ENCODE measurements at regions of chr2 and their contacts with region 1.

Region 1: GRCh38 chr2:69724540-69725159 is 17.3 kb upstream of the ANXA4 start:
- DNase-seq: peak; percentile 92
- ATAC-seq: peak; percentile 90
- H3K4me3 Mint-ChIP-seq: peak overlapping the region; percentile 70
- H3K27ac Mint-ChIP-seq: no peak overlapping the region
- H3K4me1 Mint-ChIP-seq: no peaks in the 10 kb centered on the region
- H3K27me3 Mint-ChIP-seq: no peaks in the 10 kb centered on the region
- CTCF ChIP-seq: peak; percentile 92

Region 2: GRCh38 chr2:69535817-69536241 is 188.8 kb before region 1 on chr2:
- CTCF ChIA-PET with region 1: no interaction called
- POLR2A ChIA-PET with region 1: no interaction called
- DNase-seq: no peak
- ATAC-seq: no peak
- H3K4me3 Mint-ChIP-seq: no peak overlapping the region
- H3K27ac Mint-ChIP-seq: no peak overlapping the region
- H3K4me1 Mint-ChIP-seq: no peaks in the 10 kb centered on the region
- H3K27me3 Mint-ChIP-seq: no peaks in the 10 kb centered on the region
- CTCF ChIP-seq: no peak

Region 3: DNA sequence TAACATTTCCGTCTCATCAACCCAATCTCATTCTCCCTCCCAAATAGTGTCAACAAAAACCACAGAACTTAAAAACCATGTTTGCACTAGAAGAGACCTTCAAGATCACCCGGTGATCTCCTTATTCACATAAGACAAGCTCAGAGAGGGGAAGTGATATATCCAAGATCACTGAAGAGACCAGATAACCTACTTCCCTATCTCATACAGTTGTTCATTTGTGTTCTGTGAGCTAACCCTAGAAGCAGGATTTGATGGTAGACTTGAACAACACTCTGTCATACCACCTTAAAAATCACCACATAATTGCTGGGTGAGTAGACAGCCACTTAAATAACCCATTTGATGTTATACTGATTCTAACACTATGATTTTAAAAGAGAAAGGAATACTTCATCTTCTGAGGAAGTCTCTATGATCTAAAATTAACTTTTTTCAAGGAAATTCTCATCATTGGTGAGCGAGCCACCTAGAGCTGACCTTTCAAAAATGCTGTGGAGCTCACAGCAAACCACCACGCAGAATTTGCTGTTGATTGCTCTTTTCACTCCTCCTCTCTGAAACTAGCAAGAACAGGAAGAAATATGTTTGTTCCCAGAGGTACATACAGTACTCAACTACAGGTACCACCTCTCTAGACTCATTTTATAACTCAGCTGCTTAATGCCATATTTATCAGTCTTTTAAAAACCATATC is 96.2 kb before region 1 on chr2:
- CTCF ChIA-PET with region 1: no interaction called
- POLR2A ChIA-PET with region 1: no interaction called
- DNase-seq: no peak
- ATAC-seq: no peak
- H3K4me3 Mint-ChIP-seq: no peak overlapping the region
- H3K27ac Mint-ChIP-seq: no peak overlapping the region
- H3K4me1 Mint-ChIP-seq: peaks cover 16% of the 10 kb centered on the region
- H3K27me3 Mint-ChIP-seq: no peaks in the 10 kb centered on the region
- CTCF ChIP-seq: no peak

Region 4: GRCh38 chr2:69643602-69644505 is 80.8 kb before region 1 on chr2 and contains the start of gene AAK1:
- CTCF ChIA-PET with region 1: interaction called, 14 read pairs
- POLR2A ChIA-PET with region 1: no interaction called
- DNase-seq: peak; percentile 81
- ATAC-seq: peak; percentile 69
- H3K4me3 Mint-ChIP-seq: peak within 1 kb of the TSS; percentile 91
- H3K27ac Mint-ChIP-seq: peak within 1 kb of the TSS; percentile 91
- H3K4me1 Mint-ChIP-seq: peaks cover 47% of the 10 kb centered on the region
- H3K27me3 Mint-ChIP-seq: peaks cover 12% of the 10 kb centered on the region
- CTCF ChIP-seq: no peak
- total RNA-seq, gene AAK1: 32.3 to 35.7 TPM (median 35.6 TPM) in 3 replicates

Region 5: DNA sequence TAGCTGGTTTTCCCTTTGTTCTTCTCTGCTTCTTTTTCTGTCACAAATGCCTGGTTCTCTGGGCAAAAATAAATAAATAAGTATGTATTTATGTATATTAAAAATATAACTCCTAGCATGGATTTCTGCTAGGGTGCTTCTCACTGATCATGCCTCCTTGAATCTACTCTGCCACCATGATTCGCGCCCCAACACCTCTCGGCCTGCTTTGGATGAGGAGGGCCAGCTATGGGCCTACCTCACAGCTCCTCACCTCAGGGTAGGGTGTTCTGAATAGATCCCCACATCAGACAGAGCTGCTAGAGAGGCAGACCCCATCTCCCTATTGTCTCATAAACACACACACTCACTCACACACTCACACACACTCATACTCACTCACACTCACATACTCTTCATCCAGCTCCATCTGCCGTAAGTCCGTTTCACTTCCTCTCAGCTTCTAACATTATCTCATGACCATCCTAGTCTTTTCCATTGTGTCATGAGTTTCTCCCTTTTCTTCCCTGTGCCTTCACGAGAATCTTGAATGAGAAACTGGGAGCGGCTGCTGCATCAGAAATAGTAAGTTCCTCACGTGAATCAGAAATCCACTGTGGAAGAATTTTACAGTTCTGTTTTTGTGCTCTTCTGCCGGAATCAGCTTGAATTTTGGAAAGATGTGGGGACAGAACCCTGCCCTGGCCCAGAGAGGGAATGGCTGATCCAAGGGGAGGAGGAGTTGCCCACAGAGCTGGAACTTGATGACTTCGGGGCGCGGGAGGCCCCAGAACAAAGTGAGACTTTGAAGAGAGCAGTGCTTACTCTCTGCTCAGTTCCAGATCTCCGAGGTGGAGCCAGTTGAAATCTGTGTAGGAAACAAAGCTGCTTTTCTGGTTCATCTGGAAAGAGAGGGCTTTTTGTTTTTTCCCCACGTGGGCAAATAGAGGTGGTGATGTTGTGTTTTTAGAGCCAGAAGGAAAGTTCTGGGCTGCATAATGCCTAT is 38.2 kb after region 1 on chr2:
- CTCF ChIA-PET with region 1: interaction called, 20 read pairs
- POLR2A ChIA-PET with region 1: no interaction called
- DNase-seq: no peak
- ATAC-seq: no peak
- H3K4me3 Mint-ChIP-seq: no peak overlapping the region
- H3K27ac Mint-ChIP-seq: no peak overlapping the region
- H3K4me1 Mint-ChIP-seq: no peaks in the 10 kb centered on the region
- H3K27me3 Mint-ChIP-seq: no peaks in the 10 kb centered on the region
- CTCF ChIP-seq: no peak

Region 6: DNA sequence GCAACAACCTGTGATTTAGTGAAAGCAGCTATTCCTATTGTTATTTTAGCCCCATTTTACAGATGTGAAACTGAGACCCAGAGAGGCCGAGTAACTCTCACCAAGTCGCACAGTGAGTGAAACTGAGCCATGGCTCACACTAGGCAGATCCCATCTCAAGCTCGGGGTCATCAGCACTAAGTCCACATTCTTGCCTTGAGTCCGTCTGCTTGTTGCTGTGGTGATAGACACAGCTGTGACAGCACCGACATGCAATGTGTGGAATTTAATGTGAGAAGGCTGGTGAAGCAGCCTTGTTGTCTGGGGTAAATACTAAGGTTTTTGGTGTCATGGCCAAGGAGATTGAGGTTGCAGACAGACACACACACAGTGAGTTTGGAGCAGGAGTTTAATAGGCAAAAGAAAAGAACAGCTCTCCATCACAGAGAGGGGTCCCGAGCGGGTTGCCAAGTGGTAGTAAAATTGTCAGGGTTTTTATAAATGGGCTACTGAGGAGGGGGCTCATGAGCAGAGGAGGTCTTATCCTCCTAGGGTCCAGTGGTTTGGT is 64.6 kb after region 1 on chr2:
- CTCF ChIA-PET with region 1: interaction called, 36 read pairs
- POLR2A ChIA-PET with region 1: no interaction called
- DNase-seq: no peak
- ATAC-seq: peak; percentile 60
- H3K4me3 Mint-ChIP-seq: no peak overlapping the region
- H3K27ac Mint-ChIP-seq: peak overlapping the region; percentile 83
- H3K4me1 Mint-ChIP-seq: peaks cover 18% of the 10 kb centered on the region
- H3K27me3 Mint-ChIP-seq: no peaks in the 10 kb centered on the region
- CTCF ChIP-seq: no peak

Region 7: GRCh38 chr2:69816923-69817542 is 92.4 kb after region 1 on chr2:
- CTCF ChIA-PET with region 1: interaction called, 461 read pairs
- POLR2A ChIA-PET with region 1: interaction called, 5 read pairs
- DNase-seq: peak; percentile 75
- ATAC-seq: peak; percentile 58
- H3K4me3 Mint-ChIP-seq: no peak overlapping the region
- H3K27ac Mint-ChIP-seq: no peak overlapping the region
- H3K4me1 Mint-ChIP-seq: peaks cover 13% of the 10 kb centered on the region
- H3K27me3 Mint-ChIP-seq: no peaks in the 10 kb centered on the region
- CTCF ChIP-seq: peak; percentile 91

Region 8: GRCh38 chr2:69893684-69894551 is 169.3 kb after region 1 on chr2 and contains the start of gene SNRNP27:
- CTCF ChIA-PET with region 1: interaction called, 26 read pairs
- POLR2A ChIA-PET with region 1: no interaction called
- DNase-seq: peak; percentile 75
- ATAC-seq: peak; percentile 89
- H3K4me3 Mint-ChIP-seq: peak within 1 kb of the TSS; percentile 98
- H3K27ac Mint-ChIP-seq: peak within 1 kb of the TSS; percentile 96
- H3K4me1 Mint-ChIP-seq: no peaks in the 10 kb centered on the region
- H3K27me3 Mint-ChIP-seq: no peaks in the 10 kb centered on the region
- CTCF ChIP-seq: no peak
- total RNA-seq, gene SNRNP27: 38.4 to 45.9 TPM (median 39.9 TPM) in 3 replicates

Region 9: DNA sequence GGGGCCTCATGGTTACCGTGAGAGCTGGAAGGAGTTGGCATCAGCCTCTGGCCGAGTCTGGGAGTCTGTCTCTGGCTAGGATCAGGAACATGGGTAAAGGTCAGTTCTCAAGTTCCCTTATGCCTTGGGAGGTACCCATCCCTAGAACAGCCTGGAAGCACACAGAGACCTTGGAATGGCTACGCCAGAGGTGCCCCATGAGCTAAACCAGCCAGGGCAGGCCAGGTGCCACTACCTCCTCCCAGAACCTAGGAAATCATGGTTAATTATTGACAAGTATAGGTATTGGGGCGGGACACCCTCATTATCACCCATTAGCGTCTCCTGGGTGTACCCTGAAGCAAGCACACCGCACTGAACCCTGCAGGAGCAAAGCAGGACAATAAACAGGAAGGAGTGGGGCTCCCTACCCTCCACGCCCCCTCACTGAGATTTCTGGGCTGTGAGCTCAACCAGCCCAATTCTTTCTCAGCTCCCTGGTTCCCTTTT is 239.7 kb after region 1 on chr2:
- CTCF ChIA-PET with region 1: no interaction called
- POLR2A ChIA-PET with region 1: no interaction called
- DNase-seq: no peak
- ATAC-seq: no peak; the same call in 1 of the 2 replicates
- H3K4me3 Mint-ChIP-seq: no peak overlapping the region
- H3K27ac Mint-ChIP-seq: no peak overlapping the region
- H3K4me1 Mint-ChIP-seq: peaks cover 10% of the 10 kb centered on the region
- H3K27me3 Mint-ChIP-seq: no peaks in the 10 kb centered on the region; the same call in 1 of the 2 replicates
- CTCF ChIP-seq: no peak

Region 10: GRCh38 chr2:69989422-69990126 is 264.9 kb after region 1 on chr2:
- CTCF ChIA-PET with region 1: no interaction called
- POLR2A ChIA-PET with region 1: no interaction called
- DNase-seq: no peak
- ATAC-seq: no peak
- H3K4me3 Mint-ChIP-seq: no peak overlapping the region
- H3K27ac Mint-ChIP-seq: no peak overlapping the region
- H3K4me1 Mint-ChIP-seq: peaks cover 7% of the 10 kb centered on the region
- H3K27me3 Mint-ChIP-seq: no peaks in the 10 kb centered on the region
- CTCF ChIP-seq: no peak

Measured in WTC11 (cell line).